ENCODE measurements at regions of chr3 and their contacts with region 1.

Region 1: GRCh38 chr3:15361494-15362212 is 29.3 kb upstream of the SH3BP5 start:
- DNase-seq: peak; percentile 29
- H3K4me3 Mint-ChIP-seq: peak overlapping the region; percentile 38
- H3K27ac Mint-ChIP-seq: peak overlapping the region; percentile 80
- H3K4me1 Mint-ChIP-seq: peaks cover 51% of the 10 kb centered on the region
- H3K27me3 Mint-ChIP-seq: no peaks in the 10 kb centered on the region

Region 2: GRCh38 chr3:15241341-15241740 is 120.3 kb before region 1 on chr3:
- intact Hi-C with region 1: no loop called
- DNase-seq: no peak
- H3K4me3 Mint-ChIP-seq: no peak overlapping the region
- H3K27ac Mint-ChIP-seq: no peak overlapping the region
- H3K4me1 Mint-ChIP-seq: peaks cover 7% of the 10 kb centered on the region
- H3K27me3 Mint-ChIP-seq: no peaks in the 10 kb centered on the region

Region 3: GRCh38 chr3:15291589-15292541 is 69.8 kb before region 1 on chr3:
- intact Hi-C with region 1: loop called (anchors 1 kb)
- DNase-seq: peak; percentile 74
- H3K4me3 Mint-ChIP-seq: peak overlapping the region; percentile 63
- H3K27ac Mint-ChIP-seq: peak overlapping the region; percentile 78
- H3K4me1 Mint-ChIP-seq: peaks cover 89% of the 10 kb centered on the region
- H3K27me3 Mint-ChIP-seq: no peaks in the 10 kb centered on the region

Region 4: DNA sequence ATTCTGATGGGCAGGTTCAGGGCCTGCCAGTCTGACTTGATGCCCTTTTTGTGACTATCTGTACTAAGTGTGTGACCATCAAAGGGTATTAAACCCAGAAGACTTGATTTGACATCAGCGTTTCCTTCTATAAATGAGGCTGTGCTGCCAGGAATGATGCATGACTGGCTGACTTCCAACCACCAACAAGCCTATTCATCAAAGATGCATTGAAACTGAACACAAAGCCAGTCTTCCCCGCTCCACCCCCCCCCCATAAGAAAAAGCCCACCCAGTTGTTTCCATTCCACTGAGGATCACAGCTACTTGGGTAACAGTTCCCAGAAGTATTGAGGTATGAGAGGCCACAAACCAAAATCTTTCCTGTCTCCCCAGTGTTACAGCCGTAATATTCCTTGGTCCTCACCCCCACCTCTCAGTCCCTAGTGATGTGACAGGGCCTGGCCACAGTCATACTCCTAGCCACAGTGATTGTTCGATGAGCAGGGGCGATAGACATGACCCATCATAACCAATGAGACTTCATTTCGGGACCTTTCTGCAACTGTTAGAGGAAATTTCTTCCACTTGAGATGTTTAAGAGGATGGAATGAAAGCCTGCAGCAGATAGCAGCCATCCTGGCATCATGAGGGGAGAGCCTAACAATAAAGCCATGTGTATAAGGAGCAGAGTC is 51.9 kb before region 1 on chr3:
- intact Hi-C with region 1: loop called (anchors 1 kb)
- DNase-seq: no peak
- H3K4me3 Mint-ChIP-seq: peak overlapping the region; percentile 66
- H3K27ac Mint-ChIP-seq: peak overlapping the region; percentile 94
- H3K4me1 Mint-ChIP-seq: peaks cover 66% of the 10 kb centered on the region
- H3K27me3 Mint-ChIP-seq: no peaks in the 10 kb centered on the region

Region 5: DNA sequence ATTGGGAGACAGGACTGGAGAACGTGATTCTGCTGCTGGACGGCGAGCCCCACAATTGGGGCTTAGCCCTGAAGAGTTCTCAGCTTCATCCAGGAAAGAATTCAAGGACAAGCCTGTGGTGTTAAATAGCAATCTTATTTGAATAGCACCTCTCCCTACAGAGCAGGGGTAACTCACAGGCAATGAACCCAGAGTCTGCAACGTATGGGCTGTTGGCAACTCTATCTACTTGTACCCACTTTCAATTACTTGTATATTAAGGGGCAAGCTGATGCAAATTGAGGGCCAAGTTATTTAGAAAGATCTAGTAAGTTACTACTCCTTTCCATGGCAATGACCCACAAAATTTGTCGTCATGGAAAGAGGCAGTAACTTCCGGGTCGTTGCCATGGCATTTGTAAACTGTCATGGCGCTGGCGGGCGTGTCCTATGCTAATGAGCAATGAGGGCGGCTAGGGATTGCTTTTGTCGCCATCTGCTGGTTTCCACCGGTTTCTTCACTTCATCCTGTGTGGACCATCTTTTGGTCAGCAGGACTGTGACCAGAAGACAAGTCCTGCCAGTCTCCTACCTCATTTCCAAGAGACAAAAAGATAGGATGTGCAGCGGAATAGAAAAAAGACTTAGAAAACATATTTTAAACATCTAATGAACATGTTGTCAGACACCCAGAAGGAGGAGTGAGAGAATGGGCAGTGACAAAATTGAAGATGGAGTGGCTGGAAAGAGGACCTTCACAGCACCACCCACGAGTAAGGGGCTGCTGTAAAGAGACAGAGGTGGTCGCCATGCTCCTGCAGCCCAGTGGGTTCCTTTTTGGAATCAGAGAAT is 16.5 kb after region 1 on chr3:
- intact Hi-C with region 1: loop called (anchors 1 kb)
- DNase-seq: peak; percentile 93
- H3K4me3 Mint-ChIP-seq: no peak overlapping the region
- H3K27ac Mint-ChIP-seq: peak overlapping the region; percentile 80
- H3K4me1 Mint-ChIP-seq: peaks cover 20% of the 10 kb centered on the region
- H3K27me3 Mint-ChIP-seq: peaks cover 5% of the 10 kb centered on the region

Region 6: DNA sequence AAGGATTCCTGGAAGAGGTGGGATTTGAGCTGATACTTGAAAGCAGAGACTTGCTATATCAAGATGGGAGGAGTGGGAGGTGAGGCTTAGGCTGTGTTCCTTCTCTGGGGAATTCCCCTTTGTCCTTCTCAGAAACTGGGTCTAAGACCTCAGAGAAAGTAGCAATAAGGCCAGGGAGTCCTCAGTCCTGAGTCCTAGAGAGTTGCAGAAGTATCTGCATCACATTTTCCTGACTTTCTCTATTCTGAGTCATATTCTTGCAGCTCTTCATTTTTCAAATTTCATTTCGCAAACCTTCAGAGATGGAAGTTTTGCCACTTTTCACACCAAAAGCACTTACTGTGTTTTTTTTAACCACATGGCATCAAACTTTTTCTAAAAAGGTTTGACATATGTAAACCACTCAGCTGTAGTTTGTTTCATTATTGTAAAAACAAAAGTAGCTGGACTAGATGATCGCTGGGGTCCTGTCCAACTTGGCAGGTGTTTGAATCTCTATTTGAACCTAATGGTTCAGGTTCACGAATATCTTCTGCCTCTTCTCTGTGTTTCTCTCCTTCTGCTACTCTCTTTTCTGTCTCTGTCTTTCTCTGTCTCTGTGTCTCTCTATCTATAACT is 138.6 kb after region 1 on chr3:
- intact Hi-C with region 1: loop called (anchors 1 kb)
- DNase-seq: no peak
- H3K4me3 Mint-ChIP-seq: no peak overlapping the region
- H3K27ac Mint-ChIP-seq: peak overlapping the region; percentile 37
- H3K4me1 Mint-ChIP-seq: peaks cover 38% of the 10 kb centered on the region
- H3K27me3 Mint-ChIP-seq: peaks cover under 1% of the 10 kb centered on the region

Region 7: GRCh38 chr3:15743587-15744009 is 381.9 kb after region 1 on chr3:
- intact Hi-C with region 1: loop called (anchors 2 kb)
- DNase-seq: no peak
- H3K4me3 Mint-ChIP-seq: no peak overlapping the region
- H3K27ac Mint-ChIP-seq: peak overlapping the region; percentile 55
- H3K4me1 Mint-ChIP-seq: peaks cover 51% of the 10 kb centered on the region
- H3K27me3 Mint-ChIP-seq: no peaks in the 10 kb centered on the region

Region 8: DNA sequence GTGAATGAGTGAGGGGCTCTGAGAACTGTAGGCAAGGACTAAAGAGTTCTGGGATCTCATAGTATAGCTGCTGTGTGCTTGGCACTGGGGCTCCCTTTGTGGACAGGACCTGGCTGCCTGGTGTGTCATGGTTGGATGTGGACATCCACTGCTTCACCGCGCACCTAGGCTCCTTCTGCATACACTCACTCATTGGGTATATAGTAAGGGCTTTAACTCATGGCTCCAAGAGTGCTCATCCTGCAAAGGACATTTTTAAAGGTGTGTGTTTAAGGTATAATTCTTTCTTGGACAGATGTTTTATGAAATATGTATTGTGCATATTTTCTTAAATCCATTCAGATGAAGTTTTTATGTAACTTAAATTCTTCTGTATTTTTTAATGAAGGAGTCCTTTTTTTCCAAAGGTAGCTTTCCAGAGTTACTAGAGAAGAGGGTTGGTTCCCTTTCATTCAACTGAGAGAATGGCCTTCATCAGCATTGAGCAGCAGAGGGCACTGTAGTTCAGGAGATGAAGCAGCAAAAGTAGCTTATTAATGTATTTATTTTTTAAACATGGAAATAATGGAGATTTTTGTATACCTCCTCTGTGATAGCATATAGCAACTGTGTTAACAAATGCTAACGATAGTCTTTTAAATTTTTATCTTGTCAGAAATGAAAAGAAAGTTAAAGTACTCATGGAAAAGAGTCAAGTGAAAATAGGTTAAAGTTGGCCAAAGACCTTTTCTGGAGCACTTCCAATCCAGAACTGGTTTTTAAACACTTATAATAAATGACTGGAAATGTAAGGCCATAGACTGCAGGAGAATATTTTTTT is 928.6 kb after region 1 on chr3:
- intact Hi-C with region 1: loop called (anchors 10 kb)
- DNase-seq: no peak
- H3K4me3 Mint-ChIP-seq: peak overlapping the region; percentile 91
- H3K27ac Mint-ChIP-seq: peak overlapping the region; percentile 80
- H3K4me1 Mint-ChIP-seq: peaks cover 80% of the 10 kb centered on the region
- H3K27me3 Mint-ChIP-seq: no peaks in the 10 kb centered on the region